Activated T-helper 1 cell treated with anti-CD3 and anti-CD28 coated beads, Interleukin-12 subunit alpha, Interleukin-12 subunit beta, Interleukin-2, Interleukin-4 antibody, amounts not matched to agents 30 ng/mL and 10 ng/mL and 1 ng/mL, durations not matched to agents 14 hours and 24 hours and 36 hours (primary cell): ENCODE measurements at regions of chr4 and their contacts with region 1.

Region 1: GRCh38 chr4:38804654-38805295 is at the start of gene TLR1:
- DNase-seq: no peak
- H3K4me3 Mint-ChIP-seq: peak within 1 kb of the TSS; percentile 81
- H3K27ac Mint-ChIP-seq: peak within 1 kb of the TSS; percentile 87
- H3K4me1 Mint-ChIP-seq: peaks cover 38% of the 10 kb centered on the region
- H3K27me3 Mint-ChIP-seq: no peaks in the 10 kb centered on the region
- total RNA-seq, gene TLR1: 1.9 and 2.7 TPM in 2 replicates

Region 2: GRCh38 chr4:38782452-38783108 is 22.2 kb before region 1 on chr4 and contains the start of gene TLR10:
- intact Hi-C with region 1: loop called (anchors 1 kb)
- DNase-seq: no peak
- H3K4me3 Mint-ChIP-seq: no peak within 1 kb of the TSS
- H3K27ac Mint-ChIP-seq: no peak within 1 kb of the TSS
- H3K4me1 Mint-ChIP-seq: peaks cover 11% of the 10 kb centered on the region
- H3K27me3 Mint-ChIP-seq: peaks cover 1% of the 10 kb centered on the region
- total RNA-seq, gene TLR10: not detected in 2 replicates

Region 3: DNA sequence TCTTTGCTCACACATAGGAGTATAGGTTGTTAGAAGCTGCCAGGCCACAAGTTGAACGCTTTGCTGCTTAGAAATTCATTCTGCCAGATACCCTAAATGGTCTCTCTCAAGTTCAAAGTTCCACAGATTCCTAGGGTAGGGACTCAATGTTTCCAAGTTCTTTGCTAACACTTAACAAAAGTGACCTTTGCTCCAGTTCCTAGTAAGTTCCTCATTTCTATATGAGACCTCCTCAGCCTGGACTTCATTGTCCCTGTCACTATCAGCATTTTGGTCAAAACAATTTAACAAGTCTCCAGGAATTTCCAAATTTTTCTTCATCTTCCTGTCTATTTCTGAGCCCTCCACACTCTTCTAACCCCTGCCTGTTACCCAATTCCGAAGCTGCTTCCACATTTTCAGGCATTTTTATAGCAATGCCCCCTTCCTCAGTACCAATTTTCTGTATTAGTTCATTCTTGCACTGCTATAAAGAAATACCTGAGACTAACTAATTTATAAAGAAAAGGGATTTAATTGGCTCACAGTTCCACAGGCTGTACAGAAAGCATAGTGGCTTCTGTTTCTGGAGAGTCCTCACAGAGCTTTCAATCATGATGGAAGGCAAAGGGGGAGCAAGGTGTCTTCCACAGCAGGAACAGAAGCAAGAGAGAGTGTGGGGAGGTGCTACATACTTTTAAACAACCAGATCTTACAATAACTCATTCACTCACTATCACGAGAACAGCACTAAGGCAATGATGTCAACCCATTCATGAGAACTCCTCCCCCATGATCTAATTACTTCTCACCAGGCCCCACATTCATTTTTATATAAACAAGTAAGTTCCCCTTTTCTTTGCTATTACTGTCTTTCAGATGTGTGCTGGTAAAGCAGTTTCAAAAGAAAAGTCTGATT is 11.4 kb after region 1 on chr4:
- intact Hi-C with region 1: loop called (anchors 1 kb)
- DNase-seq: no peak
- H3K4me3 Mint-ChIP-seq: no peak overlapping the region
- H3K27ac Mint-ChIP-seq: no peak overlapping the region
- H3K4me1 Mint-ChIP-seq: peaks cover 45% of the 10 kb centered on the region
- H3K27me3 Mint-ChIP-seq: no peaks in the 10 kb centered on the region

Region 4: GRCh38 chr4:38889143-38889542 is 84.4 kb after region 1 on chr4:
- intact Hi-C with region 1: loop called (anchors 1 kb)
- DNase-seq: no peak
- H3K4me3 Mint-ChIP-seq: peak overlapping the region; percentile 63
- H3K27ac Mint-ChIP-seq: peak overlapping the region; percentile 91
- H3K4me1 Mint-ChIP-seq: peaks cover 41% of the 10 kb centered on the region
- H3K27me3 Mint-ChIP-seq: no peaks in the 10 kb centered on the region